ENCODE measurements at regions of chr4 and their contacts with region 1.

Region 1: GRCh38 chr4:98385831-98386230 is 124.6 kb downstream of the RAP1GDS1 start:
- DNase-seq: no peak
- ATAC-seq: no peak
- H3K4me3 ChIP-seq: no peak overlapping the region
- H3K27ac ChIP-seq: no peak overlapping the region
- H3K4me1 ChIP-seq: peaks cover 2 to 6% of the 10 kb centered on the region in 2 experiments; a peak in 3 of 5 replicates
- H3K27me3 ChIP-seq: no peaks in the 10 kb centered on the region
- CTCF ChIP-seq: no peak
- EP300 ChIP-seq: no peak
- POLR2A ChIP-seq: no peak
- RAD21 ChIP-seq: no peak

Region 2: DNA sequence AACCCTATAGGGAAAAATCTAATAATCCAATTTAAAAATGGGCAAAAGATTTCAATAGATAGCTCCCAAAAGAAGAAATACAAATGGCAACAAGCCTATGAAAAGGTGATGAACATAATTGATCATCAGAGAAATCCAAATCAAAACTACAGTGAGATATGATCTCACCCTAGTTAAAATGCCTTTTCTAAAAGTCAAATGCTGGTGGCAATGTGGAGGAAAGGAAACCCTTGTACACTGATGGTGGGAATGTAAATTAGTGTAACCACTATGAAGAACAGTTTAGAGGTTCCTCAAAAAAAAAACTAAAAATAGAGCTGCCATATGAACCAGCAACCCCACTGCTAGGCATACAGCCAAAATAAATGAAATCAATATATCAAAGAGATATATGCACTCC is 287.1 kb before region 1 on chr4:
- CTCF ChIA-PET with region 1: no interaction called
- POLR2A ChIA-PET with region 1: no interaction called
- in situ Hi-C with region 1: no loop called
- intact Hi-C with region 1: no loop called
- DNase-seq: no peak
- ATAC-seq: no peak
- H3K4me3 ChIP-seq: no peak overlapping the region
- H3K27ac ChIP-seq: no peak overlapping the region
- H3K4me1 ChIP-seq: no peaks in the 10 kb centered on the region
- H3K27me3 ChIP-seq: no peaks in the 10 kb centered on the region
- CTCF ChIP-seq: no peak
- EP300 ChIP-seq: no peak
- POLR2A ChIP-seq: no peak
- RAD21 ChIP-seq: no peak

Region 3: GRCh38 chr4:98150092-98150761 is 235.6 kb before region 1 on chr4:
- CTCF ChIA-PET with region 1: no interaction called
- POLR2A ChIA-PET with region 1: no interaction called
- in situ Hi-C with region 1: no loop called
- intact Hi-C with region 1: loop called (anchors 5 kb)
- DNase-seq: no peak
- ATAC-seq: no peak
- H3K4me3 ChIP-seq: no peak overlapping the region
- H3K27ac ChIP-seq: no peak overlapping the region
- H3K4me1 ChIP-seq: no peaks in the 10 kb centered on the region
- H3K27me3 ChIP-seq: no peaks in the 10 kb centered on the region
- CTCF ChIP-seq: peak in 1 of 3 experiments; percentile 43; a peak in 2 of 6 replicates
- EP300 ChIP-seq: no peak
- POLR2A ChIP-seq: no peak
- RAD21 ChIP-seq: peak; percentile 40 to 50

Region 4: DNA sequence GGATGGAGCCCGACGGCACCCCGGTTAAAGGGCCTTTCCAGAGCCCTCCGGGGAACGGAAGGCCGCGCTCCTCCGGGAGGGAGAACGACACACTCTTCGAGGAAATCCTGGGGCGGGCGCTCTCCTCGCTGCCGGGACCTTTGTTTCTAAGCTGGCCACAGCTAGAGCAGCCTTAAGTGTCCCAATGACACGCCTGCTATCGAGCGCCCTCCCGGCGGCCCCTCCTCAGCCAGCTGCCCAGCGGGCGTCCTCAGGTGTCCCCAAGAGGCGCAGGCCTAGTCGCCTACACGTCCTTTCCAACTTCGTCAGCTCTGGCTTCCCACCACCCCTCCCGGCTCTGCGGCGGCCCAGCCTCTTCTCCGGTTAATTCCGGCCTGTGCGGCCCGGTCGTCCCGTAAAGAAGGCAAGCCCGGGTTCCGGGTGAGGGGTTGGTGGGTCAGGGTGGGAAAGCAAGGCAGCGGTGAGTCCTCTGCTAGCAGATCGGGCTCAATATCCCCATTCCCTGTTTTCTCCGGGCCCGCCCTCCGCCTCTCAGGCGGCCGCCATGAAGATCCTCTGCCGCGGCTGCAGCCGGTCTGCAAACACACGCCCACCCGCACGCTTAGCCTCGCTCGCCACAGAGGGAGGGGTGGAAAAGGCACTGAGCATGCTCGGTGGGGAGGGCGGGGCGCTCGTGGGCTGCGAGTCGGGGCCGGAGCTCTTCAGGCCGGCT is 125.1 kb before region 1 on chr4:
- CTCF ChIA-PET with region 1: no interaction called
- POLR2A ChIA-PET with region 1: no interaction called
- in situ Hi-C with region 1: no loop called
- intact Hi-C with region 1: loop called (anchors 5 kb)
- DNase-seq: peak; percentile 94 to 96 (median 94)
- ATAC-seq: peak; percentile 92
- H3K4me3 ChIP-seq: peak overlapping the region; percentile 79
- H3K27ac ChIP-seq: peak overlapping the region; percentile 93
- H3K4me1 ChIP-seq: peaks cover 15 to 16% of the 10 kb centered on the region in 2 experiments; a peak in 4 of 5 replicates
- H3K27me3 ChIP-seq: no peaks in the 10 kb centered on the region
- CTCF ChIP-seq: no peak
- EP300 ChIP-seq: no peak
- POLR2A ChIP-seq: peak; percentile 94
- RAD21 ChIP-seq: no peak